Activated T-helper 2 cell treated with anti-CD3 and anti-CD28 coated beads, Interferon-gamma antibody, Interleukin-2, Interleukin-4, amounts not matched to agents 10 μg/mL and 5 μg/mL and 100 μg/mL, durations not matched to agents 14 hours and 24 hours and 36 hours (primary cell): ENCODE measurements at regions of chr10 and their contacts with region 1.

Region 1: GRCh38 chr10:123582084-123582989 is 83.8 kb upstream of the GPR26 start:
- DNase-seq: peak; percentile 43
- H3K4me3 Mint-ChIP-seq: no peak overlapping the region
- H3K27ac Mint-ChIP-seq: no peak overlapping the region
- H3K4me1 Mint-ChIP-seq: no peaks in the 10 kb centered on the region
- H3K27me3 Mint-ChIP-seq: peaks cover 11% of the 10 kb centered on the region

Region 2: GRCh38 chr10:123642293-123642692 is 60.0 kb after region 1 on chr10:
- intact Hi-C with region 1: no loop called
- DNase-seq: no peak
- H3K4me3 Mint-ChIP-seq: no peak overlapping the region
- H3K27ac Mint-ChIP-seq: no peak overlapping the region
- H3K4me1 Mint-ChIP-seq: no peaks in the 10 kb centered on the region
- H3K27me3 Mint-ChIP-seq: no peaks in the 10 kb centered on the region

Region 3: DNA sequence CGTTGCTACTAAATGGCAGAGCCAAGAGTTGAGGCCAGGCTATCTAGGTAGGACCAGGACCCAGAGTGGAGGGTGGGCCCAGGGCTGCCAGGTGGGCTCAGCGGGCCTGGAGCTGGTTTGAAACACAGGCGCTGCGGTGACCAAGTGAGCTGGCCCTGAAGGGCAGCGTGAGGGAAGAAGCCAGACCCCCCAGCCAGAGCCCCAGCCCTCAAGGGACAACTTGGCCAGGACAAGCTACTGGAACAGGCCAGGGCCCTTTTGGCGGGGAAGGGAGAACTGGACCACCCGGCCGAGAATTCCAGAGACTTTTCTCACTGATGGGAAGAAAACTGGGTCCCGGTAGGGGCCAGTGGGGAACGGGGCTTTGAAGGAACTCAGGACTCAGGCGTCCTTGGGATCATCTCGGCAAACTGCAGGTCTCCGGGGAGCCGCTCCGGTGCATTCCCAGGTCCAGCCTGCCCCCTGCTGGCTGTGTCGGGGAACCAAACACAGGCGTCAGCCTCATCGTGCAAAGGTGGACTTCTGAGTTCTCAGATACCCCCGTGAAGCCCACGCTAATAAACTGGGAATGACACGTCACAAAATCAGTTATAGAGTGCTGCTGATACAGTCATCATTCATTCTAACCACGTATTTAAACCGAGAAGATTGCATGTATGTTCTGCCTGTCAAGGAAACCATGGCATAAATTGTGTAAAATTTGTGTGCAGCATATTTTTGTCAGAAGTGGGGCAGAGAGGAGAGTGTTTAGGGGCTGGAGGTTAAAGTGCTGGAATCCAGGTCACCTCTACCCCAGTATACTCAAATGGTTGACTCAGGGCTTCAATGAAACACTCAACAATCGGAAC is 385.3 kb after region 1 on chr10:
- intact Hi-C with region 1: loop called (anchors 1 kb)
- DNase-seq: peak; percentile 19
- H3K4me3 Mint-ChIP-seq: no peak overlapping the region
- H3K27ac Mint-ChIP-seq: no peak overlapping the region
- H3K4me1 Mint-ChIP-seq: no peaks in the 10 kb centered on the region
- H3K27me3 Mint-ChIP-seq: peaks cover 24% of the 10 kb centered on the region